ENCODE measurements at regions of chr22 and their contacts with region 1.

Region 1: GRCh38 chr22:34669001-34669400 is 397.0 kb upstream of the ISX start:
- DNase-seq: peak; percentile 65
- H3K4me3 ChIP-seq: no peak overlapping the region
- H3K27ac ChIP-seq: no peak overlapping the region
- H3K4me1 ChIP-seq: no peaks in the 10 kb centered on the region
- H3K27me3 ChIP-seq: no peaks in the 10 kb centered on the region
- CTCF ChIP-seq: no peak

Region 2: GRCh38 chr22:34567367-34567766 is 101.6 kb before region 1 on chr22:
- CTCF ChIA-PET with region 1: no interaction called
- dilution Hi-C with region 1: no loop called
- in situ Hi-C with region 1: loop called in 1 of 2 experiments (anchors 25 kb)
- intact Hi-C with region 1: no loop called
- DNase-seq: peak; percentile 8
- H3K4me3 ChIP-seq: no peak overlapping the region
- H3K27ac ChIP-seq: no peak overlapping the region
- H3K4me1 ChIP-seq: no peaks in the 10 kb centered on the region
- H3K27me3 ChIP-seq: no peaks in the 10 kb centered on the region
- CTCF ChIP-seq: no peak

Region 3: DNA sequence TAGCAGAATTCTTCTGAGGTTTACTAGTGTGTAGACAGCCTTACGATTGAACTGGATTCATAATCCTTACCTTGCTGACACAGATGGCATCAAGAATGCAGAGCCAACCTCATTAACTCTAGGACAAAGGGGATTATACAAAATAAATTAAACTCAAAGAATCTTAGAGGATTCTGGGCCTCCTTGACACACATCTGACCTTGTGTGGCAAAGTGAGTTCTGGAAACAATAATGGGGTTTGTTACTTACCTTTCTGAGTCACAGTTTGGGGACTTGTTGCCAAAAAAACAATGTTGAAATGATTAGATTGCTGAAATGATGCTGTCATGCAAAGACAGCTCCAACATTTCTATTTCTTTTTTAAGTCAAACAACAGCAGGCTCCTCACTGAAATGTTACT is 217.8 kb after region 1 on chr22:
- CTCF ChIA-PET with region 1: no interaction called
- dilution Hi-C with region 1: no loop called
- in situ Hi-C with region 1: no loop called
- intact Hi-C with region 1: no loop called
- DNase-seq: peak; percentile 78
- H3K4me3 ChIP-seq: no peak overlapping the region
- H3K27ac ChIP-seq: no peak overlapping the region
- H3K4me1 ChIP-seq: no peaks in the 10 kb centered on the region
- H3K27me3 ChIP-seq: no peaks in the 10 kb centered on the region
- CTCF ChIP-seq: no peak

Measured in mammary epithelial cell (primary cell).